ENCODE measurements at regions of chr20 and their contacts with region 1.

Region 1: GRCh38 chr20:2470423-2471193 is at the start of gene SNRPB:
- H3K4me3 ChIP-seq: peak within 1 kb of the TSS; percentile 74
- H3K27ac ChIP-seq: peak within 1 kb of the TSS; percentile 100
- H3K4me1 ChIP-seq: no peaks in the 10 kb centered on the region; the same call in 1 of the 2 replicates
- CTCF ChIP-seq: peak; percentile 14; the same call in 1 of the 2 replicates

Region 2: GRCh38 chr20:2508631-2509467 is 38.2 kb after region 1 on chr20 and contains the start of gene ZNF343:
- CTCF ChIA-PET with region 1: no interaction called
- POLR2A ChIA-PET with region 1: interaction called, 34 read pairs
- H3K4me3 ChIP-seq: peak within 1 kb of the TSS; percentile 76
- H3K27ac ChIP-seq: peak within 1 kb of the TSS; percentile 93
- H3K4me1 ChIP-seq: peaks cover 4% of the 10 kb centered on the region; the same call in 1 of the 2 replicates
- CTCF ChIP-seq: no peak; the same call in 1 of the 2 replicates

Region 3: DNA sequence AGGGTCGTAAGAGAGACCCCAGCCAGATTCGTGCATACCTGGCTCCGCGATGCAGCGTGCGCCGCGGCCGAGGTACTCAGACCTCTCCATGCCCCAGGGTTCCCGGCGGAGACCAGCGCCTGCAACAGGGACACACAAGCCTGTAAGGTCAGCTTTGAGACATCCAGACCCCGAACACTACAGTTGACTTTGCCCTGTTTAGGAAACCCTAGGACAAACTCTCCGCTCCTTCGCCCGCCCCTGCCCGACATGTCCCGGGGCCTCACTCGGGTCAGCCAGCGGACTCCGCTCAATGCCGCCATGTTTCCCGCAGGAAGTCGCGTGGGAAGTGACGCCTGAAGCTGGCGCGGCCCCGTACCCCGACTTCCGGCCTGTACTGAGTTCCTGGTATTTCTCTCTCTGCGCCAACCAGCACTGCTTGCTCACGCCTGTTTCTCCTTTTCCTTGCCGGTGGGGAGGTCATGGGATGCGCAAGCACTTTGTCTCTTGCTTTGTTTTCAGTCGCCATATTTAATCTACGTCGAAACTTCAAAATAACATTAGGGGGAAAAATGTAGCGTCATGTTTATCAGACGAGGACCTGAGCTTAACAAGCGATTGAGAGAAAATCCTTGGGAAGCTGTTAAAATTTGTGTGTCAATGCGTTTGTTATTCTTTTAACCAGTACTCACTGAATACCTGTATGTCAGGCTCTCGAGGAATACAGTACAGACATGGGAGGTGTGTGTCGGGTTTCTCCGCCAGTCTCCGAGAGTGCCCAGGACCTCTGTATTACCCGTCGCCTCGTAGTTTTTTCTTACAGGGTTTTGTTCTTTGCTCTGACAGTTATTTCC is 193.5 kb after region 1 on chr20 and contains the start of gene IDH3B:
- CTCF ChIA-PET with region 1: no interaction called
- POLR2A ChIA-PET with region 1: interaction called, 11 read pairs
- H3K4me3 ChIP-seq: peak within 1 kb of the TSS; percentile 78
- H3K27ac ChIP-seq: peak within 1 kb of the TSS; percentile 84
- H3K4me1 ChIP-seq: peaks cover 8% of the 10 kb centered on the region
- CTCF ChIP-seq: no peak

Region 4: GRCh38 chr20:2694001-2694471 is 223.4 kb after region 1 on chr20:
- CTCF ChIA-PET with region 1: no interaction called
- POLR2A ChIA-PET with region 1: no interaction called
- H3K4me3 ChIP-seq: no peak overlapping the region
- H3K27ac ChIP-seq: no peak overlapping the region
- H3K4me1 ChIP-seq: peaks cover 13% of the 10 kb centered on the region
- CTCF ChIP-seq: no peak